ENCODE measurements at regions of chr7 and their contacts with region 1.

Region 1: GRCh38 chr7:47818796-47819606 is 129.3 kb downstream of the PKD1L1 start:
- DNase-seq: peak in 2 of 3 donors; percentile 70 to 85
- ATAC-seq: peak; percentile 75
- H3K4me3 ChIP-seq: no peak overlapping the region
- H3K4me1 ChIP-seq: peaks cover 3% of the 10 kb centered on the region
- CTCF ChIP-seq: peak; percentile 90

Region 2: DNA sequence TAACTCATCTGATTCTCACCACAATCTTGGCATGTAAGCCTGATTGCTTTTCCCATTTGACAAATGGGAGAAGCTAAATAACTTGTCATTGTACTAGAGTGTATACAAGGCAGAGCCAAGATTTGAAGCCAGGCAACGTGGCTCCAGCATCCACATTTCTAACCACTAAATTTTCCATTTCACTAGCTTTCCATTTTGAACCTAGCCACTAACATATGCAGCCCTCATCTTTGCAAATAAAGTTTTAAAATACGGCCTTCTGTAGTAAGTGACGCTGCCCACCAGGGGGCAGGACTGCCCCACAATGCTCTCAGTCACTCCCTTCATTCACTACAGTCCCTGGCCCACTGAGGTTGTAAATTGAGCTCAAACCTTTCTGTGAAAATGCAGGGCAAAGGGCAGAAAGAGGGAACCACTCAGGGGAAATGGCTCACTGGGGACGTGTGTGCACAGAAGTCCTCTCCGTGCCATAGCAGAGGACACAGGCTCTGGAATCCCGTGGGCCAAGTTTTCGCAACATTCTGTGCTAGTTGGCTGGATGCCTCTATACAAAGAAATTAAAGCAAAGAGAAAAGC is 552.8 kb before region 1 on chr7:
- intact Hi-C with region 1: loop called (anchors 5 to 10 kb)
- DNase-seq: peak in 2 of 3 donors; percentile 76 to 77
- ATAC-seq: peak; percentile 91
- H3K4me3 ChIP-seq: no peak overlapping the region
- H3K4me1 ChIP-seq: peaks cover 12% of the 10 kb centered on the region
- CTCF ChIP-seq: peak; percentile 74

Region 3: GRCh38 chr7:47444379-47445057 is 374.5 kb before region 1 on chr7:
- intact Hi-C with region 1: loop called in 1 of 2 experiments (anchors 10 kb)
- DNase-seq: peak in 1 of 3 donors; percentile 66
- ATAC-seq: peak; percentile 43
- H3K4me3 ChIP-seq: no peak overlapping the region
- H3K4me1 ChIP-seq: peaks cover 37% of the 10 kb centered on the region
- CTCF ChIP-seq: peak; percentile 18

Region 4: DNA sequence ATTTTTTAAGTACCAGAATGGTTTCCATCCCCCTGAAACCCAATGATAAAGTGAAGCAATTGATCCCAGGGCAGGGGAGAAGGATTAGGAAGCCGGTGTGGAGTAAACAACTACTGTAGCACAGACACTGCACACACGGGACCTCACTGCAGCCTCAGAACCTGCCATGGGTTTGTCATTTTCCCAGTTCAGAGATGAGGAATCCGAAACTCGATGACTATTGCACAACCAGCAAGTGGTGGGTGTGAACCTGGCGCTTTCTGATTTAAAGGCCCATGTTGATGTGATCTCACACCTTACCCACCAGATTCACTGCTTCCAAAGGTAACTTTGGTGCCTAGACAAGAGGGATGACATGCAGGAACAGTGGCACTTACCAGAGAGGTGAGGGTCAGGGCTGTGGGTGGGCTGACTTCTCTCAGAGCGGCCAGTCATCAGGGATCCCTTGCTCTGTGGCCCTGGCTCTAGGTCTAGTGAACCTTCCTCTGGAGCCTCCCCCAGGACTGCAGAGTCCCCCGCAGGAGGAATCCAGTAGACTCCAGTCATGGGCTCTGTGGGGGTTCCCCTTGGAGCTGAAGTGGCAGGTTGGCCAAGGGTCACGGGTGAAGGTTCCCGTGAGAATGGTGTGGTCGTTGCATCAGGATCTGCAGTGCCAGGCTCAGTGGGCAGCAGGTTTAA is 66.4 kb after region 1 on chr7:
- intact Hi-C with region 1: no loop called
- DNase-seq: no peak
- ATAC-seq: no peak
- H3K4me3 ChIP-seq: no peak overlapping the region
- H3K4me1 ChIP-seq: no peaks in the 10 kb centered on the region
- CTCF ChIP-seq: no peak

Measured in mucosa of descending colon (tissue), 3 donors.